CD4-positive, alpha-beta memory T cell (primary cell): ENCODE measurements at regions of chr17 and their contacts with region 1.

Region 1: DNA sequence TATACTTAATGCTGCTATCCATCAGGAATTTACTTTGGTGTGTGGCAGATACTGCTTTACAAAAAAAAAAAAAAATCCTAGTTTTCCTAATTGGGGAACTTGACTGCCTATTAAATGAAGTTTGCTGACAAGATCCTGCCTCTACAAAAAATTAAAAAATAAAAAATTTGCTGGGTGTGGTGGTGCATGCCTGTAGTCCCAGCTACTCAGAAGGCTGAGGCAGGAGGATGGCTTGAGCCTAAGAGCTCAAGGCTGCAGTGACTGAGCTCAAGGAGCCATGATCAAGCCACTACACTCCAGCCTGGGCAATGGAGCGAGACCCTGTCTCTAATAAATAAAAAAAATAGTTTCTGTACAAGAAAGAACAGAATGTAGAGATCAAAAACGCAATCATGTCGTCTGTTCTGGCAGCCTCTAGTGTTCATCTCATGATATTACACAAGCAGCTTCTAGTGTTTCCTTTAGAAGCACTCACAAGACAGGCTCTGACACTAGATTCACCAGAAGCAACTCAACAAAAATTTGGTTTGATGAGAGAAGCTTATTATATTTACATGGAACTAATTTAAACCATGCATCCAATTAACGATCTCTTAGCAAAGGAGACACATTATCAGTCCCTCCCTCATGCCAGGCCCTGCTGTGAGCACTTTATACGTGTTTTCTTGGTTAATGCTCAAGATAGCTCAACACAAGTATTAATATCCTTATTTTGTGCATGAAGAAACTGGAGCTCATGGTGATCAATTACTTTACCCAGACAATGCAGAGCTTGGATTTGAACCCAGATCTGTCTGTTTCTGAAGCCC is 6.8 kb upstream of the KRTAP17-1 start:
- DNase-seq: peak; percentile 39 to 65 (median 61)
- H3K4me3 ChIP-seq: no peak overlapping the region
- H3K4me3 Mint-ChIP-seq: peak overlapping the region in 1 of 8 donors; percentile 67
- H3K27ac ChIP-seq: no peak overlapping the region
- H3K27ac Mint-ChIP-seq: peak overlapping the region; percentile 85 to 92 (median 85)
- H3K4me1 ChIP-seq: peaks cover 52% of the 10 kb centered on the region
- H3K4me1 Mint-ChIP-seq: peaks cover 23 to 58% (median 45%) of the 10 kb centered on the region in 4 donors
- H3K27me3 ChIP-seq: no peaks in the 10 kb centered on the region
- H3K27me3 Mint-ChIP-seq: no peaks in the 10 kb centered on the region

Region 2: DNA sequence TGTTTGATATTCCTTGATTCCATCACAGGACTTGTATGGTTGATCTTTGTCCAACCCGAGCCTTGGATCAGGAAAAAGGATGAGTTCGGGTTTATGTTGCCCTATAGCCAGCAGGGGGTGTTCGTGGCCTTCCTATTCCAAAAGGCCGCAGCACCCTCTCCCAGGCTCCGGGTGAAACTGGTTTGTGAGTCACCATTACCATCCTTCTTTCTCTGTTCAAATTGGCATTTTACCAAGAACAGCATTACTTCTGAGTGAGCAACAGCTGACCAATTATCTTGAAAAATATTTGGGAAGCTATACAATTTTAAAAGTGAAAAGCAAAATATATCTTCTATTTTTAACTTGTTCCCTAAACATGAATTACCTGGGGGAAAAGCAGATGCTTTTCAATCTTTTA is 412.9 kb before region 1 on chr17:
- CTCF ChIA-PET with region 1: interaction called, 21 read pairs
- POLR2A ChIA-PET with region 1: no interaction called
- intact Hi-C with region 1: loop called (anchors 2 kb)
- DNase-seq: peak; percentile 48 to 69 (median 60)
- H3K4me3 ChIP-seq: no peak overlapping the region
- H3K4me3 Mint-ChIP-seq: no peak overlapping the region
- H3K27ac ChIP-seq: no peak overlapping the region
- H3K27ac Mint-ChIP-seq: no peak overlapping the region
- H3K4me1 ChIP-seq: no peaks in the 10 kb centered on the region
- H3K4me1 Mint-ChIP-seq: no peaks in the 10 kb centered on the region
- H3K27me3 ChIP-seq: no peaks in the 10 kb centered on the region
- H3K27me3 Mint-ChIP-seq: peaks cover 23 to 39% of the 10 kb centered on the region in 2 donors

Region 3: DNA sequence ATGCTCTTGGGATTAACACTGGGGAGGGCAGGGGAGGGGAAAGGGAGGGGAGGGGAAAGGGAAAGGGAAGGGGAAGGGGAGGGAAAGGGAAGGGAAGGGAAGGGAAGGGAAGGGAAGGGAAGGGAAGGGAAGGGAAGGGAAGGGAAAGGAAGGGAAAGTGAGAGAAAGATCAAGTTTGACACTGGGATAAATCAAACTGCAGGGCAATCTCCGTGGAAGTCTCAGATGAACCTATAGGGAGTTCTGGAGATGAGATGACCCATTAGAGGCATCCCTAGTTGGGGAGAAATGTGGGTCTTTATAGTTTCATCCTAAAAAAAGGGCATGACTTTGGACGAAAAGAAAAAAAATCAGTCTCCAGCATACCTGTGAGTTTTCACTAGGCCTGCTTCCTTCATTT is 200.6 kb before region 1 on chr17:
- CTCF ChIA-PET with region 1: interaction called, 21 read pairs
- POLR2A ChIA-PET with region 1: interaction called, 6 read pairs
- intact Hi-C with region 1: loop called (anchors 2 kb)
- DNase-seq: no peak
- H3K4me3 ChIP-seq: no peak overlapping the region
- H3K4me3 Mint-ChIP-seq: no peak overlapping the region
- H3K27ac ChIP-seq: no peak overlapping the region
- H3K27ac Mint-ChIP-seq: peak overlapping the region in 1 of 7 donors; percentile 12
- H3K4me1 ChIP-seq: peaks cover 54% of the 10 kb centered on the region
- H3K4me1 Mint-ChIP-seq: peaks cover 13 to 68% (median 50%) of the 10 kb centered on the region in 4 donors
- H3K27me3 ChIP-seq: no peaks in the 10 kb centered on the region
- H3K27me3 Mint-ChIP-seq: peaks cover 2 to 4% of the 10 kb centered on the region in 2 donors

Region 4: GRCh38 chr17:41163828-41164227 is 158.5 kb before region 1 on chr17:
- CTCF ChIA-PET with region 1: no interaction called
- POLR2A ChIA-PET with region 1: no interaction called
- intact Hi-C with region 1: no loop called
- DNase-seq: no peak
- H3K4me3 ChIP-seq: no peak overlapping the region
- H3K4me3 Mint-ChIP-seq: no peak overlapping the region
- H3K27ac ChIP-seq: no peak overlapping the region
- H3K27ac Mint-ChIP-seq: no peak overlapping the region
- H3K4me1 ChIP-seq: no peaks in the 10 kb centered on the region
- H3K4me1 Mint-ChIP-seq: peaks cover 0 to 4% (median under 1%) of the 10 kb centered on the region in 4 donors
- H3K27me3 ChIP-seq: peaks cover 3% of the 10 kb centered on the region
- H3K27me3 Mint-ChIP-seq: peaks cover 6 to 10% of the 10 kb centered on the region in 2 donors

Region 5: DNA sequence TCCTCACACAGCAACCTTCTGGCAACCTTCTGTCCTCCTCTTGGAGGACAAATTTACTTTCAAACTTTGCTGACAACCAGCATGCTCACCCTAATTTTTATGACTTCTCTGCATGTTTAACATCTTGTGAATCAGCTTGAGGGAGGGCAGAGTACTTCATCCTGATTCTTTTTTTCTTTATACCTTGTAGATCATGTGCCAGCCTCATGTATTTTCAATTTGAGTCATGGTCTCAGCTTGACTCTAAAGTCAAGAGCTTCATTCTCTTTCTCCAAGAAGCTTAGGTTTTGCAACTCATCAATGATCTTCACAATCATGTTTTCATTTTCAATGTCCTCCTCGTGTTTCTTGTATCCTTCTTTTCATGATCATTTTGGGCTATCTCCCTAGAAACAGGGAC is 50.4 kb before region 1 on chr17:
- CTCF ChIA-PET with region 1: interaction called, 10 read pairs
- POLR2A ChIA-PET with region 1: no interaction called
- intact Hi-C with region 1: no loop called
- DNase-seq: no peak
- H3K4me3 ChIP-seq: no peak overlapping the region
- H3K4me3 Mint-ChIP-seq: no peak overlapping the region
- H3K27ac ChIP-seq: no peak overlapping the region
- H3K27ac Mint-ChIP-seq: no peak overlapping the region
- H3K4me1 ChIP-seq: no peaks in the 10 kb centered on the region
- H3K4me1 Mint-ChIP-seq: peaks cover 0 to 10% (median 4%) of the 10 kb centered on the region in 4 donors
- H3K27me3 ChIP-seq: no peaks in the 10 kb centered on the region
- H3K27me3 Mint-ChIP-seq: peaks cover 16% of the 10 kb centered on the region in 2 donors

Region 6: GRCh38 chr17:41338961-41339485 is 16.7 kb after region 1 on chr17:
- CTCF ChIA-PET with region 1: interaction called, 48 read pairs
- POLR2A ChIA-PET with region 1: interaction called, 16 read pairs
- intact Hi-C with region 1: loop called (anchors 2 kb)
- DNase-seq: peak; percentile 87 to 94 (median 91)
- H3K4me3 ChIP-seq: no peak overlapping the region
- H3K4me3 Mint-ChIP-seq: peak overlapping the region; percentile 49 to 80 (median 69)
- H3K27ac ChIP-seq: peak overlapping the region; percentile 72
- H3K27ac Mint-ChIP-seq: peak overlapping the region; percentile 95 to 100 (median 99)
- H3K4me1 ChIP-seq: peaks cover 100% of the 10 kb centered on the region
- H3K4me1 Mint-ChIP-seq: peaks cover 71 to 97% (median 86%) of the 10 kb centered on the region in 4 donors
- H3K27me3 ChIP-seq: no peaks in the 10 kb centered on the region
- H3K27me3 Mint-ChIP-seq: no peaks in the 10 kb centered on the region

Region 7: GRCh38 chr17:41446806-41447205 is 124.5 kb after region 1 on chr17:
- CTCF ChIA-PET with region 1: no interaction called
- POLR2A ChIA-PET with region 1: no interaction called
- intact Hi-C with region 1: no loop called
- DNase-seq: no peak
- H3K4me3 ChIP-seq: no peak overlapping the region
- H3K4me3 Mint-ChIP-seq: no peak overlapping the region
- H3K27ac ChIP-seq: no peak overlapping the region
- H3K27ac Mint-ChIP-seq: no peak overlapping the region
- H3K4me1 ChIP-seq: no peaks in the 10 kb centered on the region
- H3K4me1 Mint-ChIP-seq: peaks cover 0 to 3% (median under 1%) of the 10 kb centered on the region in 4 donors
- H3K27me3 ChIP-seq: no peaks in the 10 kb centered on the region
- H3K27me3 Mint-ChIP-seq: peaks cover 5 to 9% of the 10 kb centered on the region in 2 donors

Region 8: DNA sequence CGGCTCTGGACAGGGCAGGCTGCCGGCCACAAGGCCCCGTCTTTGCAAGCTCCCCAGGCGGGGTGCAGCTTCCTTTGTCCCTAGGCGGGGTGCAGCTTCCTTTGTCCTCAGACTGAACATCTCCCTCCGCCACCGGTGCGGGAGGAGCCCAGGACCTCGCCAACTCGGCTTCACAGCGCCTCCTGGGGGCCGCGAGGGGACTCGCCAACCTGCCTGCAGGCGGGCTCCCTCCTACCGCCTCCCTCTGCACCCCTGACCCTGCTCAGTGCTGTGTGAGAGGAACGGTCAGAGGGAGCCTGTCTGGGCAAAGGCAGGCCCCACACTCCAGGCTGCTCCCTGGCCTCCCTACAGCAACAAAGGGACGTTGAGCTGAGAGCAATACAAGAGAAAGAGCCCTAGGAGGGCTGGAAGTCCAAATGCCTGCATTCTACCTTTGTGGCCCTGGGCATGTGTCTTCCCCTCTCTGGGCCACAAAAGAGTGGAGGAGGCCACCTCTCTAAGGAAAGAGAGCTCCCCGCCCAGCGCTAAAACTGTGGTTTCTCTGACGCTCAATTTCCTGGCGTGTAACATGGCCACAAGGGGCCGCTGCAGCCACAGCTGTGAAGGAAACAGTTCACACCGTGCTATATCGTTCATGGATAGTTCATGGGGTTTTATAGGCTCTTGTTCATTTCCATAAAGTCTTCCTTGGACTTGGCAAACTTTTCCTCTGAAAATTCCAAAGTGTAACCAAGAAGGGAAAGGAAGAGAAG is 226.7 kb after region 1 on chr17:
- CTCF ChIA-PET with region 1: interaction called, 43 read pairs
- POLR2A ChIA-PET with region 1: interaction called, 4 read pairs
- intact Hi-C with region 1: loop called (anchors 2 kb)
- DNase-seq: peak; percentile 82 to 88 (median 84)
- H3K4me3 ChIP-seq: peak overlapping the region in 1 of 2 donors; percentile 29
- H3K4me3 Mint-ChIP-seq: peak overlapping the region; percentile 27 to 78 (median 64)
- H3K27ac ChIP-seq: peak overlapping the region; percentile 30
- H3K27ac Mint-ChIP-seq: peak overlapping the region; percentile 68 to 84 (median 80)
- H3K4me1 ChIP-seq: peaks cover 17% of the 10 kb centered on the region
- H3K4me1 Mint-ChIP-seq: peaks cover 5 to 20% (median 15%) of the 10 kb centered on the region in 4 donors
- H3K27me3 ChIP-seq: no peaks in the 10 kb centered on the region
- H3K27me3 Mint-ChIP-seq: peaks cover 10 to 11% of the 10 kb centered on the region in 2 donors

Region 9: GRCh38 chr17:41571561-41572434 is 249.5 kb after region 1 on chr17 and contains the start of gene KRT9:
- CTCF ChIA-PET with region 1: no interaction called
- POLR2A ChIA-PET with region 1: no interaction called
- intact Hi-C with region 1: no loop called
- DNase-seq: no peak
- H3K4me3 ChIP-seq: no peak within 1 kb of the TSS
- H3K4me3 Mint-ChIP-seq: no peak within 1 kb of the TSS
- H3K27ac ChIP-seq: no peak within 1 kb of the TSS
- H3K27ac Mint-ChIP-seq: no peak within 1 kb of the TSS
- H3K4me1 ChIP-seq: peaks cover 3% of the 10 kb centered on the region
- H3K4me1 Mint-ChIP-seq: peaks cover under 1 to 10% (median 8%) of the 10 kb centered on the region in 4 donors
- H3K27me3 ChIP-seq: no peaks in the 10 kb centered on the region
- H3K27me3 Mint-ChIP-seq: peaks cover 11 to 26% of the 10 kb centered on the region in 2 donors
- total RNA-seq, gene KRT9: not detected